Left lung (tissue), 14 donors: ENCODE measurements at regions of chr17 and their contacts with region 1.

Region 1: DNA sequence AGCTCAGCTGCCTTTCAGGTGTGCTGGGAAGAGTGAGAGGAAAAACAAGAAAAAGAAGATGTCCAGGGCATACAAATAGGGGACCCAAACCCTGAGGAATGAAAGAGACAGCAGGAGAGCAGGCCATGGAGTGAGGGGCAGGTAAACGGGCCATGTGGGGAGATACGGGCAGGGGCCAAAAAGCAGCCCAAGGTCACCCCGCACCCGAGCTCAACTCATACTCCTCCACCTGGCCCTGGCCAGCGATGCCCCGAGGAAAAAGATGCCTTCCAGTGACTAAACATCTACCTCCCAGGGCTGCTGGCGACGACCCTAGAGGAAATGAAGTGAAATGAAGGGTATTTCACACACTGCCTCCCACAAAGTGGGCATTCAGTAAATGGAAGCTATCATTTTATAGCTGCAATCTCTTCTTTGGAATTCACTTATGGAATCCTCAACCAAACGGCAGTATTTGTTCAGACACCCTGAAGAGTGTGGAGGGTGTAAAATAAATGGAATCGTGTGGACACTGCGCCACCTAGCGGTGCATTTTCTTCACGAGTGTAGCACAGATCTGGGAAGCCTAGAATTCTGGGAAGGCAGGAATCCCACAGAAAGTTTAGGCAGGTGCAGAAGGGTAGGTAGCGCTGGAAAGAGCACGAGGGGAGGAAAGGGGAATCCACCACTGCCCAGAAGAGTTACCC is 14.9 kb downstream of the ELAC2 start:
- DNase-seq: peak in 3 of 4 donors; percentile 62 to 79 (median 68)
- ATAC-seq: peak; percentile 93
- H3K4me3 ChIP-seq: no peak overlapping the region
- H3K27ac ChIP-seq: no peak overlapping the region
- H3K4me1 ChIP-seq: no peaks in the 10 kb centered on the region
- H3K27me3 ChIP-seq: no peaks in the 10 kb centered on the region
- CTCF ChIP-seq: peak; percentile 73 to 75

Region 2: DNA sequence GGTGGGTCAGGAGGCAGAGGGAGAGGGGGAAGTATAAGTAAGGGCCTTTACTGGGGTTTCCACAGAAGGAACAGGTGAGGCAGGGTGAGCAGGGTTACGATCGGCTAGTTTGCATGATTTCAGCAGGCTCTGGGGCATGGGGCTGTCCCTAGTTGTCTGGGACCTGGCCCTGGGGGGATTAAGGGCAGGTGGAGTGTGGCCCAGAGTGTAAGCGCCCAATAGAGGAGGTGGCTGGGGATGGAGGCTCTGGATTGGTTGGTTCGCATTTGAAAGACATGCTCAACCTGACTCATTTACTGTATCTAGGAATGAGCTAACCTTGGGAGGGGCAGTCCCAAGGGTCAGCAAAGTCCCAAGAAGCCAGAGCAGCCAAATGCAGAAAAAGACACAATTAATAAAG is 751.9 kb before region 1 on chr17:
- intact Hi-C with region 1: loop called in 1 of 2 experiments (anchors 5 kb)
- DNase-seq: no peak
- ATAC-seq: no peak
- H3K4me3 ChIP-seq: no peak overlapping the region
- H3K27ac ChIP-seq: no peak overlapping the region
- H3K4me1 ChIP-seq: no peaks in the 10 kb centered on the region
- H3K27me3 ChIP-seq: no peaks in the 10 kb centered on the region
- CTCF ChIP-seq: no peak